Spleen (tissue), 13 donors: ENCODE measurements at regions of chr10 and their contacts with region 1.

Region 1: GRCh38 chr10:24642622-24643417 is 80.9 kb downstream of the ARHGAP21 start:
- DNase-seq: no peak
- H3K4me3 ChIP-seq: no peak overlapping the region
- H3K27ac ChIP-seq: no peak overlapping the region
- H3K4me1 ChIP-seq: peaks cover 0 to 36% (median 17%) of the 10 kb centered on the region in 6 donors
- H3K27me3 ChIP-seq: no peaks in the 10 kb centered on the region
- CTCF ChIP-seq: peak; percentile 56 to 82 (median 74)
- POLR2A ChIP-seq: no peak

Region 2: DNA sequence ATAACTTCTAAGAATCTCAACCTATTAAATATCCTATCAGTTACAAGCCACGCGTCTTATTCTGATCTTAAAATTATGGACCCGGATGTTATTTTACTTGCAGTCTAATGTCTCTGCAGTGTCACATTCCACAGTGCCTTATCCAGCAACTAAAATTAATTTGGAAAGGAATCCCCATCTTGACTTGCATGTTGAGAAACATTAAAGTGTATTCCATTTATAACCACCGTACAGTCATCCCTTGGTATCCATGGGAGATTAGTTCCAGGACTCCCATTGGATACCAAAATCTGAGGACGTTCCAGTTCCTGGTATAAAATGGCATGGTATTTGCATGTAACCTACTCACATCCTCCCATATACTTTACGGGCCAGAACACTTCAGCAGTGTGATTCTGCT is 113.9 kb before region 1 on chr10:
- intact Hi-C with region 1: no loop called
- DNase-seq: no peak
- H3K4me3 ChIP-seq: no peak overlapping the region
- H3K27ac ChIP-seq: no peak overlapping the region
- H3K4me1 ChIP-seq: no peaks in the 10 kb centered on the region
- H3K27me3 ChIP-seq: no peaks in the 10 kb centered on the region
- CTCF ChIP-seq: no peak
- POLR2A ChIP-seq: no peak

Region 3: GRCh38 chr10:24680647-24681524 is 38.1 kb after region 1 on chr10:
- intact Hi-C with region 1: no loop called
- DNase-seq: no peak
- H3K4me3 ChIP-seq: no peak overlapping the region
- H3K27ac ChIP-seq: no peak overlapping the region
- H3K4me1 ChIP-seq: peaks cover 0 to 15% (median 6%) of the 10 kb centered on the region in 6 donors
- H3K27me3 ChIP-seq: no peaks in the 10 kb centered on the region
- CTCF ChIP-seq: no peak
- POLR2A ChIP-seq: no peak

Region 4: GRCh38 chr10:24724381-24725228 is 81.8 kb after region 1 on chr10:
- intact Hi-C with region 1: loop called (anchors 10 kb)
- DNase-seq: peak; percentile 97
- H3K4me3 ChIP-seq: peak overlapping the region; percentile 68 to 90 (median 78)
- H3K27ac ChIP-seq: peak overlapping the region; percentile 39 to 94 (median 90)
- H3K4me1 ChIP-seq: peaks cover 16 to 45% (median 31%) of the 10 kb centered on the region in 6 donors
- H3K27me3 ChIP-seq: no peaks in the 10 kb centered on the region
- CTCF ChIP-seq: peak in 1 of 11 experiments; percentile 5
- POLR2A ChIP-seq: peak in 1 of 3 donors; percentile 90

Region 5: GRCh38 chr10:24989867-24990266 is 347.0 kb after region 1 on chr10:
- intact Hi-C with region 1: loop called (anchors 10 kb)
- DNase-seq: no peak
- H3K4me3 ChIP-seq: no peak overlapping the region
- H3K27ac ChIP-seq: no peak overlapping the region
- H3K4me1 ChIP-seq: no peaks in the 10 kb centered on the region
- H3K27me3 ChIP-seq: peaks cover 0 to 4% (median 0%) of the 10 kb centered on the region in 7 donors
- CTCF ChIP-seq: no peak
- POLR2A ChIP-seq: no peak

Region 6: GRCh38 chr10:25080880-25081581 is 438.2 kb after region 1 on chr10:
- intact Hi-C with region 1: loop called (anchors 5 kb)
- DNase-seq: no peak
- H3K4me3 ChIP-seq: no peak overlapping the region
- H3K27ac ChIP-seq: no peak overlapping the region
- H3K4me1 ChIP-seq: peaks cover 0 to 8% (median 2%) of the 10 kb centered on the region in 6 donors
- H3K27me3 ChIP-seq: peaks cover 0 to 2% (median 0%) of the 10 kb centered on the region in 7 donors
- CTCF ChIP-seq: peak; percentile 36 to 84 (median 75)
- POLR2A ChIP-seq: no peak